ENCODE measurements at regions of chr22 and their contacts with region 1.

Region 1: DNA sequence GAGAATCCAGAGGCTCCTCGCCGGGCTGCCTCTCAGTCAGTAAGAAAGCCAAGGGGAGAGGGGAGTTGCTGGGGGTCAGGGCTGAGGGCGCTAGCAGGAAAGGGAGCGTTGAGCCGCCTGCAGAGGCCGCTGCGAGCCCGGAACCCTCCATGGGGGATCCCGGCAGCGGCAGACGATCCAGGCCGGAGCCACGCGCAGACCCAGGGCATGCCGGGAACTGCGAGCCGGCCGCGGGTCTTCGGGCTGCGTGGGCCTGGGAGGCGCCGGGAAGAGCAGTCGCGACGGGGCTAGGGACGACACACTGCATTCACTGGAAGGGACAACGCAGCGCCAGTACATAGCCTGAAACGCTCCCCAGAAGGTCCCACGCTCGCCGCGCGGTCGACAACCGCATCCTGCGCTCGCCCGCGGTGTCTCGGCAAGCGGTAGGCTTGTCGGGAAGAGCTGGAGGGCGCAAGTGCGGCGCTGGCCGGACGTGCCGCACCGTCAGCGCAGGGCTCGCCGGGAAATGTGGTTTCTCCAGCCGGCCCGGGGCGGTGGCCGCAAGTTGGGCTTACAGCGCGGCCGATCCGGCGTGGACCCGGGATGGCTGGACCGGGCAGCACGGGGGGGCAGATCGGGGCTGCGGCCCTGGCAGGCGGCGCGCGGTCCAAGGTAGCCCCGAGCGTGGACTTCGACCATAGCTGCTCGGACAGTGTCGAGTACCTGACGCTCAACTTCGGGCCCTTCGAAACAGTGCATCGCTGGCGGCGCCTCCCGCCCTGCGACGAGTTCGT is at the start of gene LZTR1:
- DNase-seq: peak; percentile 91

Region 2: GRCh38 chr22:20864186-20864908 is 117.6 kb before region 1 on chr22:
- CTCF ChIA-PET with region 1: no interaction called
- POLR2A ChIA-PET with region 1: no interaction called
- DNase-seq: no peak

Region 3: DNA sequence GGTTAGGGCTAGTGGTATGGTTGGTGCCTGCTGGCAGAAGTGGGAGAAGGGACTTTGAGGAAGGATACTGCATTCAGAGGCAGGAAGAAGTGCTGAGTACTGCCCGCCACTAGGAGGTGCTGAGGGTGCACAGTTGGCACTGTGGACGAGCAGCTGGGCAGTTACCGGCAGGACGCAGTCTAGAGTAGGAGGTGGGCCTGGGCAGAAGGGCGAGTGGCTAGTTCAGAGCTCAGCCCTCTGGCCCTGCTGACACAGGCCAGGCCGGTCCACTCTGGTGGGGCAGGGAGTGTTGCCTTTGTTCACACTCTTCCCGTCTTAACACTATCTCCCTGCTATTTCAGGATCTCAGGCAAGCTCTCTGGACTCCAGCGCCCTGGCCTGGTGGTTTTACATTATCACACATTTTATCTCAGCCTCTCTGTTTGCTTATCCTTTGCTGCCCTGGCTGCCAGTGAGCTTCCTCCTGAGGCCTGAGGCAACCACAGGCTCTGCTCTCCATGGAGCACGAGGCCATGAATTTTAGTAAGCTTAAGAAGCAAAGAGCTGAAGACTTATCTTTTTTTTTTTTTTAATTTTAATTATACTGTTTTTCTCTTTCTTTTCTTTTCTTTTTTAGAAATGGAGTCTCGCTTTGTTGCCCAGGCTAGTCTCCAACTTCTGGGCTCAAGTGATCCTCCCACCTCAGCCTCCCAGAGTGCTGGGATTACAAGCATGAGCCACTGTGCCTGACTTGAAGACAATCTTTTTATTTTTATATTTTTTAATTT is 96.2 kb before region 1 on chr22:
- CTCF ChIA-PET with region 1: interaction called, 4 read pairs
- POLR2A ChIA-PET with region 1: interaction called, 19 read pairs
- DNase-seq: peak; percentile 91

Region 4: GRCh38 chr22:20937031-20937793 is 44.8 kb before region 1 on chr22:
- CTCF ChIA-PET with region 1: no interaction called
- POLR2A ChIA-PET with region 1: interaction called, 12 read pairs
- DNase-seq: no peak

Region 5: DNA sequence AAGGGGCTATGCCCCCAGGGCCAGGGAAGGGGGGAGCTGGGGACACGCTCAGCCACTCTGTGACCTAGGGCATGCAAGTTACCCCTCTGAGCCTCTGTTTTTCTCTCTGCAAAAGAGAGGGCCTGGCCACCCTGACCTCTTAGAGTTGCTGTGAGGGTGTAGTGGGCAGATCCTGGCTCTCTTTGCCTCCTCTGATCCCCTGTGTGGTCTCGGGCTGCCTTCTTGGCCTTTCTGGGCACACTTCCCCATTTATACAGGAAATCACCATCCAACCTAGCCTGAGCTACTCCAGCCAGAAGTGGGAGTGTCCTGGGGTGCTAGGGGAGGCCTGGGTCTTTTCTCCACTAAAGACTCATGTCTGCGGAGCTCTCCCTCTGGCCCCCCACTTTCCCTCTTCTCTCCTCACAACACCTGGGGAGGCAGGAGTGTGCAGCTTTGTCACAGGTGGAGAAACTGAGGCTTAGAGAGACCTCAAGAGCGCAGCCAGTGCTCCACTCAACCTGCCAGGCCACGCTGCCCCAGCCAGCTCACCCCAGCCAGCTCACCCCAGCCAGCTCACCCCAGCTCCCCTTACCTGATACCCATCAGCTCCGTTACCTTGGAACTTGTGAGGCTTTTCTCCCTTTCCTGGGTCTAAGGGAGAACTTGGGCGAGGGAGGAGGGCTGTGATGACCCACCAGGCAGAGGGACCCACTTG is 13.5 kb before region 1 on chr22:
- CTCF ChIA-PET with region 1: interaction called, 8 read pairs
- POLR2A ChIA-PET with region 1: interaction called, 92 read pairs
- DNase-seq: no peak

Region 6: GRCh38 chr22:21014202-21014725 is 32.3 kb after region 1 on chr22:
- CTCF ChIA-PET with region 1: no interaction called
- POLR2A ChIA-PET with region 1: interaction called, 22 read pairs
- DNase-seq: peak; percentile 99